Left cardiac atrium (tissue), 4 donors: ENCODE measurements at regions of chr2 and their contacts with region 1.

Region 1: GRCh38 chr2:113977660-113978523 is 88.0 kb downstream of the ACTR3 start:
- DNase-seq: no peak
- ATAC-seq: peak in 1 of 2 donors; percentile 6

Region 2: GRCh38 chr2:114550895-114551793 is 573.3 kb after region 1 on chr2:
- intact Hi-C with region 1: loop called in 1 of 2 experiments (anchors 5 kb)
- DNase-seq: peak; percentile 40
- ATAC-seq: peak; percentile 38 to 78